AG04450 (cell line): ENCODE measurements at regions of chr9 and their contacts with region 1.

Region 1: DNA sequence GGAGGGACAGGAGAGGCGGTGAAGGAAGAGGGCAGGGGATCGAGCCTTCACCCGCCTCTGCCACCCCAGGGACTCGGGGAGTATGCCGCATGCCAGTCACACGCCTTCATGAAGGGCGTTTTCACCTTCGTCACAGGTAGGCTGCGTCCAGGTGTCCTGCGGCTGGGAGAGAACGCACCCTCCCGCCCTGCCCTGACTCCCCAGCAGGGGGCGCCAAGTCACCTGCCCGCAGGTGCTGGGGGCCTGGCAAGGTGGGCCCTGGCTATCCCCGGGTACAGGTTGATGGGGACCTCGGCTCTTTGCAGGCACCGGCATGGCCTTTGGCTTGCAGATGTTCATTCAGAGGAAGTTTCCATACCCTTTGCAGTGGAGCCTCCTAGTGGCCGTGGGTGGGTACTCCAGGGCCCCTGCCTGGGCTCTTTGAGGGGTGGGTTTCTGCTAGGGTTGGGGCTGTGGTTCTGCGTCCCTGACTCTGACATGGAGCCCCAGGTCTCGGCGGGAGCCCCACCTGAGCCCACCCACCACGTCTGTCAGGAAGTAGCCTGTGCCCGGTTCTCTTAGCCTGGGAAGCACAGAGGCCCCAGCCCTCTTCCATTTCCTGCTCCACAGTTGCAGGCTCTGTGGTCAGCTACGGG is 615 bp downstream of the TMEM141 start:
- DNase-seq: no peak
- H3K4me3 ChIP-seq: peak overlapping the region; percentile 91
- H3K27ac ChIP-seq: peak overlapping the region; percentile 57
- H3K27me3 ChIP-seq: peaks cover 9% of the 10 kb centered on the region
- CTCF ChIP-seq: peak; percentile 93

Region 2: DNA sequence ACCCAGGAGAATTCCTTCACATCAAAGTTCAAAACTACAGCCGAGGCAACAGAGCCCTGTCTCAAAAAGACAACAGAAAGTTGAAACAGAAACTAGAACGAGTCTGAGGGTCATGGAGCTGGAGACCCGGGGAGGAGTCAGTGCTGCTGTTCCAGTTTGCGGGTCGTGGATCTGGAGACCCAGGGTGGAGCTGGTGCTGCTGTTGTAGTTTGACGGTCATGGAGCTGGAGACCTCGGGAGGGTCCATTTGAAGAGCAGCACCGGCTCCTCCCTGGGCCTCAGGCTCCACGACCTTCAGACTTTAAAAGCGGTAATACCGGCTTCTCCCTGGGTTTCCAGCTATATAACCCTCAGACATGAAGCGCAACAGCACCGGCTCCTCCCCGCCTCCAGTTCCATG is 14.4 kb before region 1 on chr9:
- CTCF ChIA-PET with region 1: interaction called, 17 read pairs
- POLR2A ChIA-PET with region 1: no interaction called
- DNase-seq: no peak
- H3K4me3 ChIP-seq: no peak overlapping the region
- H3K27ac ChIP-seq: no peak overlapping the region
- H3K27me3 ChIP-seq: peaks cover 35% of the 10 kb centered on the region
- CTCF ChIP-seq: no peak

Region 3: GRCh38 chr9:136807281-136808074 is 15.7 kb after region 1 on chr9 and contains the start of gene RABL6:
- CTCF ChIA-PET with region 1: interaction called, 13 read pairs
- POLR2A ChIA-PET with region 1: interaction called, 3 read pairs
- DNase-seq: no peak
- H3K4me3 ChIP-seq: peak within 1 kb of the TSS; percentile 78
- H3K27ac ChIP-seq: peak within 1 kb of the TSS; percentile 52
- H3K27me3 ChIP-seq: peaks cover under 1% of the 10 kb centered on the region
- CTCF ChIP-seq: no peak
- polyA plus RNA-seq, gene RABL6: 35.4 and 41.1 TPM in 2 replicates

Region 4: GRCh38 chr9:136991993-136992818 is 200.4 kb after region 1 on chr9 and contains the start of gene PAXX:
- CTCF ChIA-PET with region 1: no interaction called
- POLR2A ChIA-PET with region 1: no interaction called
- DNase-seq: peak; percentile 57
- H3K4me3 ChIP-seq: peak within 1 kb of the TSS; percentile 74
- H3K27ac ChIP-seq: no peak within 1 kb of the TSS
- H3K27me3 ChIP-seq: peaks cover 6% of the 10 kb centered on the region
- CTCF ChIP-seq: no peak
- polyA plus RNA-seq, gene PAXX: 6.0 and 6.7 TPM in 2 replicates

Region 5: GRCh38 chr9:137064027-137064879 is 272.5 kb after region 1 on chr9:
- CTCF ChIA-PET with region 1: interaction called, 23 read pairs
- POLR2A ChIA-PET with region 1: no interaction called
- DNase-seq: no peak
- H3K4me3 ChIP-seq: no peak overlapping the region
- H3K27ac ChIP-seq: no peak overlapping the region
- H3K27me3 ChIP-seq: peaks cover 2% of the 10 kb centered on the region
- CTCF ChIP-seq: peak; percentile 85